Colonic mucosa (tissue), 4 donors: ENCODE measurements at regions of chr5 and their contacts with region 1.

Region 1: DNA sequence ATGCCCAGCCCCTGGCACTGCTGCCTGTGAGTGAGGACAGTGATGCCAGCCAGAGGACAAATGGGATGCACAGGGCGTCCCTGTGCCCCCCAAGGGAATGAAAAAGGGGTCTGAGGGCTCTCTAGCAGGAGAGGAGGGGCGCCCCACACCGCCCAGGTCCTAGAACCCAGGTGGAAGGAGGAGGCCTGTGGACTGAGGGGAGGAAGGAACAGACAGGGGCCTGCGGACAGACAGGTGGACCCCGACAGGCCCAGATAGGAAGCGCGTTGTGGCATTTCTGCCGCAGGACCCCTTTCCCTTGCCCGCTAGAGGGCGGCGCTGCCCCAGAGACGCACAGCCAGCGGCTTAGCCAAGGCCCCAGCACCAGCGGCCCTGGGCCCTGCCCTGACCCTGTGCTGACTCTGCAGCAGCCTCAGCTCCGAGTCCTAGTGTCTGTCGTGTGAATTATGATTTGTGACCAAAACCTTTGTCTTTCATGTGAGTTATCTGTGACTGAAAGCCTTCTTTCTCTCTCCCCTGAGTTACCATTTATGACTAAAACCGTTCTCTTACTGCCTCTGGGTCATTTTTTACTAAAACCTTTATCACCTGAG is 30.7 kb downstream of the TRIP13 start:
- DNase-seq: peak; percentile 77
- H3K4me3 ChIP-seq: no peak overlapping the region
- H3K27ac ChIP-seq: no peak overlapping the region
- H3K4me1 ChIP-seq: no peaks in the 10 kb centered on the region
- H3K27me3 ChIP-seq: peaks cover 12% of the 10 kb centered on the region
- CTCF ChIP-seq: peak; percentile 90

Region 2: DNA sequence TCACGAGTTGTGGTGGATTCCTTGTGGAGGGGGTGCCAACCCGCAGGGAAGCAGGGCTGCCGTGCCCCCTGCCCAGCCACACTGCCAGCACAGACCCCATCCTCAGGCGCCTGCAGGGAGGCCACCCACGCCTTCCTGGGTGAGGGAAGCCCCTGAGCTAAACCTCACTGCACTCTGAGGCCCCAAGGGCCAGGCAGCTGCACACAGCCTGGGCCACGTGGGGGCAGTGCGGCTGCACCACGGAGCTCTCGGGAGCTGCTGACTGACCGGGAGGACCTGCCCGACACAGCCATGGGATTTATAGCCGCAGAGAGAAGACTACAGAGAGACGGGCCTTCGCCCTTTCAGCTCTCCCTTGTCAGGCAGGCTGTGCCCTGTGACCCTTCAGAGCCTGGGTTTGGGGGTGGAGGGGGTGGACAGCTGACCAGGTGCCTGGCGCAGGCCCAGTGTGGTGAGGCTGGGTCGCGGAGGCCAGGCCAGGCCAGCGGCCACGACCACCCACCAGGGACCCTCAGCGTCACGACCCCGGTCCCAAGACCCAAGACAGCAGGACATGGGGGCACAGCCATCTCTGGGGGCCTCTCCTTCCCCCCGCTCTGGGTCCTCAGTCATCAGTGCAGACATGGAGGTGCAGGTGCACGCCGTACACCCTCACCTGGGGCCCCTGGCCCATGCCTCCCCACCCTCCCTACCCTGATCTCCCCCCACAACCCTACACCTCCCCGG is 606.1 kb before region 1 on chr5:
- intact Hi-C with region 1: no loop called
- DNase-seq: peak; percentile 50
- H3K4me3 ChIP-seq: no peak overlapping the region
- H3K27ac ChIP-seq: no peak overlapping the region
- H3K4me1 ChIP-seq: peaks cover 7% of the 10 kb centered on the region
- H3K27me3 ChIP-seq: peaks cover 28% of the 10 kb centered on the region
- CTCF ChIP-seq: peak; percentile 49

Region 3: GRCh38 chr5:1011226-1011631 is 87.9 kb after region 1 on chr5:
- intact Hi-C with region 1: loop called (anchors 5 kb)
- DNase-seq: peak; percentile 53
- H3K4me3 ChIP-seq: no peak overlapping the region
- H3K27ac ChIP-seq: no peak overlapping the region
- H3K4me1 ChIP-seq: no peaks in the 10 kb centered on the region
- H3K27me3 ChIP-seq: peaks cover 47% of the 10 kb centered on the region
- CTCF ChIP-seq: peak; percentile 43

Region 4: DNA sequence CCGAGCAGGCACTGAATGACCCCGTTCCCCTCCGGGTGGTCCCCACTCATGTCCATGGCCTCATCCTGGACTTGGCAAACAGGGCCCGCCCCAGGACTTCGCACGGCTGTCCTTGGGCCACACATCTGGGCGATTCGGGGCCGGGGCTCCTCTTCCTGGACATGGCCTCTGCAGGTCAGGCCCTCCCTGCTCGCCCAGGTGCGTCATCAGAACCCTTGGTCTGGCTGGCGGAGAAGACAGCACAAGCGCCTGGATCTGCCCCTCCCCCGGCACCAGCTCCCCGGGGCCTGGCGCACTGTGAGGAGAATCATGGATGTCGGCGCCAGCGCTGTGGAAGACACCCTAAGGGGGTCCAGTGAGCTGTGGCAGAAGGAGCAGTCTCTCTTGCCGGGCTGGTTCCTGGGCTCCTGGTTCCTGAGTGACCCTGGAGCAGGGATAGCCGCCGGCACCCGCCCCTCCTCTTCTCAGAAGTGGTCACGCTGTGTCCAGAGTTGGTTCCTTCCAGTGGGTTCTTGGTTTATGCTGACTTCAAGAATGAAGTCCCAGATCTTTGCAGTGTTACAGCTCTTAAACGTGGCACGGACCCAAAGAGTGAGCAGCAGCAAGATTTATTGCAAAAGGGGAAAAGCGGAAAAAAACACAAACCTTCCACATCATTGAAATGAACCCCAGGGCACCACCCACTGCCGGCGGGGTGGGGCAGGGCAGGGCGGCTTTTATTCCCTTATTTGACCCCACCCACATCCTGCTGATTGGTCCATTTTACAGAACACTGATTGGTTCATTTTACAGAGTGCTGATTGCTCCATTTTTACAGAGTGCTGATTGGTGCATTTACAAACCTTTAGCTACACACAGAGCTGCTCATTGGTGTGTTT is 214.4 kb after region 1 on chr5:
- intact Hi-C with region 1: loop called (anchors 2 kb)
- DNase-seq: peak; percentile 75
- H3K4me3 ChIP-seq: no peak overlapping the region
- H3K27ac ChIP-seq: no peak overlapping the region
- H3K4me1 ChIP-seq: peaks cover 11% of the 10 kb centered on the region
- H3K27me3 ChIP-seq: no peaks in the 10 kb centered on the region
- CTCF ChIP-seq: no peak

Region 5: DNA sequence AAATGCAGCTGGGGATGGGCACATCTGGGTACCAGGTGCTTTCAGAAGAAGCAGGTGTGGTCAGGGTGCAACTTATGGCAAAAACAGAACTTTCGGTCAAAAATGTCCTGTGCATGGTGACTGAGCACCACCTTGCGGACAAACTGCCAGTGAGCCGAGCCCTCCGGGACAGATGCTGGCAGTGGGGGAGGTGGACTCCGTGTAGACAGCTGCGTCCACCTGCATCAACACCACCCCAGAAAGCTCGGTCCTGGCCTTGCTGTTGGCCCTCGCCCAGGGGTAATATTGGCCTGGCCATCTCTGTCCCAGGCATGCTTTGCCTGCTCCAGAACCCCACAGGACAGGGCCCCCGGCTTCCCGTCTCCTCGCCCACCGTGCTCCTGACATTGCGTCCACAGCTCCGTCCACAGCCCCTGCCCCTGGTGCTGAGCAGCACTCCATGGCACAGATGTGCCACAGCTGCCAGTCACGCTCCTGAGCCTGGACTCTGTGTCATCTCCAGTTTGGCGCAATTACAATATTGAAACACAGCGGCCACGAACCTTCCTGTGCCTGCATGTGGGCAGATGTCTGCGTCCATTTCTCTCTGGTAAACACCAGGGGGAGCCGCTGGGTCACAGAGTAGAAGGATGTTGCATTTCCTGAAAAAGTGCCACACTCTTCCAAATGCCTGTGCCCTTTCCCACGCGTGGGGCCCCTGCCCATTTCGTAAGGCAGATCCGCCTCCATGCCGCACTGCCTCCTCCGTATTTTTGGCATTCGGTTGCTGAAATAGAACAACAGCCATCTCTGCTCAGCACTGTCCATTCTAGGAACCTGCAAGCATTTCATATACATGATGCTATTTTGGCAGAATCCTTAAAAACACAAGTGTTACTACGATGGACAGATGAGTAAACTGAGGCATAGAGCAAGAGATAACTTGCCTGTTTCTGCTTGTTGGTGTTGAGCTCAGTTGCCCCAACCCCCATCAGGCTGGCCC is 244.6 kb after region 1 on chr5:
- intact Hi-C with region 1: loop called (anchors 2 kb)
- DNase-seq: peak; percentile 75
- H3K4me3 ChIP-seq: no peak overlapping the region
- H3K27ac ChIP-seq: no peak overlapping the region
- H3K4me1 ChIP-seq: peaks cover 5% of the 10 kb centered on the region
- H3K27me3 ChIP-seq: no peaks in the 10 kb centered on the region
- CTCF ChIP-seq: peak; percentile 21